T-cell (primary cell): ENCODE measurements at regions of chr7 and their contacts with region 1.

Region 1: DNA sequence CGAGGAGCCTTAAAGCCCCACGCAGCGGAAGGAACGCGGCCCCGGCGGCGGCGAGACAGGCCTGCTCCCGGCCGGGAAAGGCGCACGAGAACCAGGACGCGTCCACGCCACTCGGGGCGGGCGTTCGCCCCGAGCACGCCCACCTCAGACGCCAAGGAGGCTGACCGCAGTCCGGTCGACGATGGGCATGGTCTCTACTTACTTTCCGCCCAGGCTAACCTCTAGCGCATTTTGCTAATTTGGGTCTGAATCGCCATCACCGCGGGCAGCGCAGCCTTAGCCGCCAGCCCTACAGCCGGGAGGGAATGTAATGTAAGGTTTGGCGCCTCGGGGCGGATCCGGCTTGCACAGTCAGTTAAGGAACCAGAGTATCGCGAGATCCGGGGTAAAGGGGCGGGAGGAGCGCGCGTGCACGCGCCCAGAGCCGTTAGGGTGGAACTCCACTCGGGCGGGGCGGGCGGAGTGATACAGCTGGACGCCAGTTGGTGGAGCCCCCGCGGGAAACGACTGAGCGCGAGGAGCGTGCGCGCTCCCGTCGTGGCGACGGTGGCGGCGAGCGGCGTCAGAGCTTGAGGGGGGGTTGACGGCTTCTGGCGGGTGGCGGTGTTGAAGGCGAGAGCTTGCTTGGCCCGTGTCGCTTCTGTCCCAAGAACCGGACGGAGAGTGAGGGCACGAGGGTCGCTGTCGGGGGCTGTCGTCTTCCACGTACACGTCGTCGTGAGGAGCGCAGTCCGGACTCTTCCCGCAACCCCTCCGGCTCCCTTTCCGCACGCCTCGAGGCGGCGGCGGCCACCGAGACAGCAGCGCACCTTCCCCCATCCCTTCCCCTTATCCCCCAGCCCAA is at the start of gene LUC7L2:
- DNase-seq: peak; percentile 99 to 100 (median 100)
- ATAC-seq: peak; percentile 77 to 84 (median 81)
- H3K4me3 ChIP-seq: peak within 1 kb of the TSS; percentile 79 to 100
- H3K4me3 Mint-ChIP-seq: peak within 1 kb of the TSS; percentile 97 to 99 (median 97)
- H3K27ac ChIP-seq: peak within 1 kb of the TSS; percentile 99
- H3K27ac Mint-ChIP-seq: peak within 1 kb of the TSS; percentile 99
- H3K4me1 ChIP-seq: peaks cover 19 to 25% of the 10 kb centered on the region in 2 experiments
- H3K4me1 Mint-ChIP-seq: peaks cover 46 to 61% (median 49%) of the 10 kb centered on the region in 3 donors
- H3K27me3 ChIP-seq: no peaks in the 10 kb centered on the region
- H3K27me3 Mint-ChIP-seq: no peaks in the 10 kb centered on the region
- total RNA-seq, gene LUC7L2: 131 to 169 (median 142) TPM

Region 2: GRCh38 chr7:139370301-139370942 is 10.8 kb after region 1 on chr7:
- CTCF ChIA-PET with region 1: no interaction called
- POLR2A ChIA-PET with region 1: interaction called, 4 to 10 read pairs
- DNase-seq: no peak
- ATAC-seq: no peak
- H3K4me3 ChIP-seq: no peak overlapping the region
- H3K4me3 Mint-ChIP-seq: peak overlapping the region in 1 of 3 donors; percentile 22
- H3K27ac ChIP-seq: no peak overlapping the region
- H3K27ac Mint-ChIP-seq: peak overlapping the region; percentile 25 to 73
- H3K4me1 ChIP-seq: peaks cover 8 to 9% of the 10 kb centered on the region in 2 experiments
- H3K4me1 Mint-ChIP-seq: peaks cover 76 to 81% (median 79%) of the 10 kb centered on the region in 3 donors
- H3K27me3 ChIP-seq: no peaks in the 10 kb centered on the region
- H3K27me3 Mint-ChIP-seq: no peaks in the 10 kb centered on the region

Region 3: DNA sequence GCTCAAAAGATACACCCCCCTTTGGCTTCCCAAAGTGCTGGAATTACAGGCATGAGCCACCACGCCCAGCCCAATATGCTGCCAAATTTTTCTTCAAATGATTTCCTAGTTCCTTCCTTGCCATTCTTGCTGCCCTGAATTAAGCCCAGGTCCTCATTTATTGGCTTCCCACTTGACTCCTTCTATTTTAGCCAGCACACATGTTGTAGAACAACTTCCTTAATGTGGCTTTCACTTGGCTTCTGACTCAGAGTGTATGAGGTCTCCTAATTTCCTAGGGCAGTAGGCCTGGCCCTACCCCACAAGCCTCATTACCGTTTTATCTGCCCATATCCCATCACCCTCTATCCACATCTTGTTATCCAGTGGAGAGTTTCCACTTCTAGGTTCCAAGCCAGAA is 440.0 kb after region 1 on chr7:
- CTCF ChIA-PET with region 1: interaction called in 1 of 2 experiments, 11 read pairs
- POLR2A ChIA-PET with region 1: no interaction called
- DNase-seq: no peak
- ATAC-seq: no peak
- H3K4me3 ChIP-seq: no peak overlapping the region
- H3K4me3 Mint-ChIP-seq: no peak overlapping the region
- H3K27ac ChIP-seq: no peak overlapping the region
- H3K27ac Mint-ChIP-seq: no peak overlapping the region
- H3K4me1 ChIP-seq: no peaks in the 10 kb centered on the region
- H3K4me1 Mint-ChIP-seq: peaks cover 6 to 9% (median 7%) of the 10 kb centered on the region in 3 donors
- H3K27me3 ChIP-seq: no peaks in the 10 kb centered on the region
- H3K27me3 Mint-ChIP-seq: peaks cover 0 to 2% of the 10 kb centered on the region in 2 donors